ENCODE measurements at regions of chr22 and their contacts with region 1.

Region 1: DNA sequence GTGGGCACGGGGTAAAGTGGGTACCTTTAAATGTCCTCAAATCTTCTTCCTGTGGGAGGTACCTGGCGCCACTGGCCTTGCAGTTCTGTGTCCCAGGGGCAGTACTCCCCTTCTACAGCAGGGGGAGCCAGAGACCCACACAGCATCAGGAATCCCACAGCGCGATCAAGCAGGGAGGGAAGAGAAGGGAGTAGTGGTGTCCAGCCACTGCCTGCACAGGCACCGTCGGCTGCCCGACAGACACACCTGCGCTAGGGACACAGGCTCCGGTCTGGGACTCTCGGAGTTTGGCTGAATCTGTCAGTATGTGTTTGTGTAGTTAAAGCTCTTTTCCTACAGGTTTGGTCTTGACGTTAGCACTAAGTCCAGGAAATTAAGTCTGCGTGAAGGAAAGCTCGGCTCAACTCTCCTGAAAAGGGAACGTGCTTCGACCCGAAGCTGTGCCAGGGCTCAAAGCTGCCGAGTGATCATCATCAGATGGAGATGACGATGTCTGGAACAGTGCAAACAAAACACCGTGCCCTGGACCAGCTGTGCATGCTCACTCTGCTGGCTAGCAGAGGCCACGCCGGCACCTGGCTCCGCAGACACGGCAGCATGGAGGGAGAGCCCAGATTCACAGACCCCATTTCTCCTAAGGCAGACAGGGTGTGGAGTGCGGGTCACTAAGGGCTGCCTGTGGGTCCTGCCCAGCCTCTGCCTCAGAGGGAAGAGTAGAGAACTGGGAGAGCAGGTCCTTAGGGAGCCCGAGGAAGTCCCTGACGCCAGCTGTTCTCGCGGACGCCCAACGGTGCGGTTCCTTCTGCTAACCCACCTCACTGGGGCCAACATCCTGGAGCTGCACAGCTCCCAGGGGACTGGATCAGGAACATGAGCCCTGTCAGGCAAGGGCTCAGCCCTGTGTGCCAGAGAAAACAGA is 56.0 kb upstream of the BID start:
- DNase-seq: peak; percentile 92
- H3K4me3 ChIP-seq: peak overlapping the region in 1 of 2 experiments; percentile 17; a peak in 1 of 4 replicates
- H3K27ac ChIP-seq: no peak overlapping the region; a peak in 1 of 4 replicates
- H3K4me1 ChIP-seq: peaks cover 0 to 9% of the 10 kb centered on the region in 2 experiments; a peak in 1 of 4 replicates
- H3K27me3 ChIP-seq: no peaks in the 10 kb centered on the region
- CTCF ChIP-seq: peak; percentile 97
- EP300 ChIP-seq: no peak
- RAD21 ChIP-seq: peak; percentile 98

Region 2: GRCh38 chr22:17706018-17706900 is 124.0 kb before region 1 on chr22:
- CTCF ChIA-PET with region 1: no interaction called
- POLR2A ChIA-PET with region 1: no interaction called
- DNase-seq: peak; percentile 33
- H3K4me3 ChIP-seq: peak overlapping the region; percentile 33 to 63; a peak in 3 of 4 replicates
- H3K27ac ChIP-seq: peak overlapping the region; percentile 64 to 95
- H3K4me1 ChIP-seq: peaks cover 3 to 7% of the 10 kb centered on the region in 2 experiments; a peak in 3 of 4 replicates
- H3K27me3 ChIP-seq: no peaks in the 10 kb centered on the region
- CTCF ChIP-seq: no peak
- EP300 ChIP-seq: 0 out of 4 replicates have a peak, but pooled peaks of 1 of the 2 experiments have one; percentile 20
- RAD21 ChIP-seq: no peak

Region 3: GRCh38 chr22:17818180-17818579 is 12.1 kb before region 1 on chr22:
- CTCF ChIA-PET with region 1: interaction called, 19 read pairs
- POLR2A ChIA-PET with region 1: no interaction called
- DNase-seq: no peak
- H3K4me3 ChIP-seq: no peak overlapping the region
- H3K27ac ChIP-seq: no peak overlapping the region
- H3K4me1 ChIP-seq: no peaks in the 10 kb centered on the region
- H3K27me3 ChIP-seq: no peaks in the 10 kb centered on the region
- CTCF ChIP-seq: no peak
- EP300 ChIP-seq: no peak
- RAD21 ChIP-seq: no peak

Region 4: DNA sequence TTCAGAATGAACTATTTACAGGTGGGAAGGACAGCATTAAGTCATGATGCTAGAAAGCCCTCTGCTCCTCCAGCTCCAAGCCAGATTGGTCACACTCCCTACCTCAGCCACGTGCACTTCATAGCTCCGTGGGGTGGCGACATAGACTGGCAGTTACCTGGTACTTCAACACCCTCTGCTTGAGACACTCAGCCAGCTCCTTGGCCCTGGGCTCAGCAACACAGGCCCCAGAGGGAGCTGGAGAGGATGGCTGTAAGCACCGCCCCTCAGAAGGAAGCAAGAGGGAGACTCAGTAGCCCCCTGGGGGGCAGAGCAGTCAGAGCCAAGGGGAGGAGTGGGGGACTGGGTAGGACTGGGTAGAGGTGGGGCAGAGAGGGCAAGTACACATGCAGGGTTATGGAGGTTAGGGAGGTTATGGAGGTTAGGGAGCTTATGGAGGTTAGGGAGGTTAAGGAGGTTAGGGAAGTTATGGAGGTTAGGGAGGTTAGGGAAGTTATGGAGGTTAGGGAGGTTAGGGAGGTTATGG is 46.1 kb after region 1 on chr22:
- CTCF ChIA-PET with region 1: interaction called, 13 read pairs
- POLR2A ChIA-PET with region 1: no interaction called
- DNase-seq: no peak
- H3K4me3 ChIP-seq: no peak overlapping the region
- H3K27ac ChIP-seq: no peak overlapping the region
- H3K4me1 ChIP-seq: peaks cover 0 to 36% of the 10 kb centered on the region in 2 experiments; a peak in 2 of 4 replicates
- H3K27me3 ChIP-seq: no peaks in the 10 kb centered on the region
- CTCF ChIP-seq: no peak
- EP300 ChIP-seq: no peak
- RAD21 ChIP-seq: no peak

Region 5: GRCh38 chr22:17891481-17892167 is 61.3 kb after region 1 on chr22:
- CTCF ChIA-PET with region 1: interaction called, 112 read pairs
- POLR2A ChIA-PET with region 1: no interaction called
- DNase-seq: peak; percentile 62
- H3K4me3 ChIP-seq: no peak overlapping the region
- H3K27ac ChIP-seq: no peak overlapping the region; a peak in 1 of 4 replicates
- H3K4me1 ChIP-seq: peaks cover 8 to 9% of the 10 kb centered on the region in 2 experiments; a peak in 3 of 4 replicates
- H3K27me3 ChIP-seq: no peaks in the 10 kb centered on the region
- CTCF ChIP-seq: peak; percentile 39
- EP300 ChIP-seq: no peak
- RAD21 ChIP-seq: peak; percentile 76

Region 6: DNA sequence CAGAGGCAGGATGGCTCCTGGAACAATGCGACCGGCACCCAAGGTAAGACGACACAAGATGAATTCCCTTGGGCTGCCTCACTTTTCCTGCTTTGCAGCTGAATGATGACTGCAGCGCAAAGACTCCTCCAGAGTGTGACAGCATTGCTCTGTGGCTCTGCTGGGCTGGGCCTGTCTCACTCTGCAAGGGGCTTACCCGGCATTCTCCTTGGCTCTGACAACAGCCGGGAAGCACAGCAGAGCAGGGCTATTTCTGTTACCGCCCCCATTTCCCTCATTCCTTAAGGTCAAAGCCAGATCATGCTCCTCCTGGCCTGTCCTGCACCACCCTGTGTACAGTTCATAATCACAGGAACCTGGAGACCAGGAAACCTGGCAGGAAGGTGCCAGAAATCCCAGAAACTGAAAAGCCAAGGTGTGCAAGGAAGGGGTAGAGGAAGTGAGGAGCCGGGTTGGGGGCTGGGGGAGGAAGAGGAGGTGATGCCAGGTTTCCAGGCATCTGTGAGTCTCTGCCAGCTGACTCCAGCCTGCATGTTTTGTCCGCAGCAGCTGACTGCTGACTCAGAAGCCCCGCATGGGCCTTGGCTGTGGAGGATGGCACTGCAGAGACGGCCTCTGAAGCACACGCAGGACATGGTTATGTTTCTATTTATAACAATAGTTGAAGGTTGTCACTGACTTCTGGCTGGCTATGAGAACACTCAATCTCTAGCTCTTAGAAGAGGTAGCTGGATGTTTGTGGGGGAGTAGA is 80.4 kb after region 1 on chr22:
- CTCF ChIA-PET with region 1: interaction called, 14 read pairs
- POLR2A ChIA-PET with region 1: no interaction called
- DNase-seq: peak; percentile 68
- H3K4me3 ChIP-seq: peak overlapping the region in 1 of 2 experiments; percentile 57; a peak in 2 of 4 replicates
- H3K27ac ChIP-seq: peak overlapping the region; percentile 60 to 94
- H3K4me1 ChIP-seq: peaks cover 20 to 33% of the 10 kb centered on the region in 2 experiments
- H3K27me3 ChIP-seq: no peaks in the 10 kb centered on the region
- CTCF ChIP-seq: peak; percentile 66
- EP300 ChIP-seq: peak in 1 of 2 experiments; percentile 55; a peak in 1 of 4 replicates
- RAD21 ChIP-seq: peak; percentile 88

Region 7: DNA sequence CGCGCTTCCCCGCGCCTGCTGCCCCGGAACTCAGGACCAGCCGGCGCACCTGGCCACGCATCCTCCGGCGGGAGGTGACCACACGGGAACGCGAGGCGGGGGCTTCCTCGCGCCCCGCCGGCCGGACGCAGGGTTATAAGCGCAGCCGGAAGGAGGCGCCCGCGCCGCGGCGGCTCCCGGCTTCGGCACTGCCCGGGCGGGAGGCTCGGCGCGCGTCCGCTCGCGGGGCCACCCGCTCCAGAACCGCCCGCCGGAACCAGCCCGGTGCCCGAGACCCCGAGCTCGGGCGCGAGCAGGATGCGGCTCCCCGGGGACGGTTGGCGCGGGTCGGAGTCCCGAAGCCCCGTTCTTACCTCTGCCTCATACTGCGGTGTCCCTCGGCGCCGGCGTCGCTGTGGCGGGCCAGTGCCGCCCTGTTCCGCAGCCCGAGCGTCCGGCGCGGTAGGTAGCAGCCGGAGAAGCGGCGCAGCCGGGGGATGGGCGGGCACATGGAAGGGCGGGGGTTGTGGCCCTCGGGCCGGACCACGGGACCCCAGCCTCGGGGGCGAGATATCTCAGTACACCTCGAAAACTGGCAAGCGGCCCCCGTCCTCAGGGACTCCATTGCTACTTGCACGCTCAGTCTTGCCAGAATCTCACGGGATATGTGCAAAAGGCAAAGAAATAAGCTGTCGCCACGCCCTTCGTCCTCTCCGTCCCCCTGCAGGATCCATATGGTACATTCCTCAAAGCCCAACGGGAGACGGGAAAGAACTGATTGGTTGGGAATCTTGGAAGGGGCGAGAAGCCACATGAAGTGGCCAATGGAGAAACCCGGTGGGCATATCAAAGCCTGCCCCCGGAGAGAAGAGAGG is 171.0 kb after region 1 on chr22:
- CTCF ChIA-PET with region 1: interaction called, 15 read pairs
- POLR2A ChIA-PET with region 1: no interaction called
- DNase-seq: peak; percentile 95
- H3K4me3 ChIP-seq: peak overlapping the region; percentile 69 to 92
- H3K27ac ChIP-seq: peak overlapping the region; percentile 84 to 97
- H3K4me1 ChIP-seq: peaks cover 4 to 6% of the 10 kb centered on the region in 2 experiments; a peak in 2 of 4 replicates
- H3K27me3 ChIP-seq: no peaks in the 10 kb centered on the region
- CTCF ChIP-seq: peak; percentile 54
- EP300 ChIP-seq: no peak
- RAD21 ChIP-seq: peak; percentile 52

Region 8: DNA sequence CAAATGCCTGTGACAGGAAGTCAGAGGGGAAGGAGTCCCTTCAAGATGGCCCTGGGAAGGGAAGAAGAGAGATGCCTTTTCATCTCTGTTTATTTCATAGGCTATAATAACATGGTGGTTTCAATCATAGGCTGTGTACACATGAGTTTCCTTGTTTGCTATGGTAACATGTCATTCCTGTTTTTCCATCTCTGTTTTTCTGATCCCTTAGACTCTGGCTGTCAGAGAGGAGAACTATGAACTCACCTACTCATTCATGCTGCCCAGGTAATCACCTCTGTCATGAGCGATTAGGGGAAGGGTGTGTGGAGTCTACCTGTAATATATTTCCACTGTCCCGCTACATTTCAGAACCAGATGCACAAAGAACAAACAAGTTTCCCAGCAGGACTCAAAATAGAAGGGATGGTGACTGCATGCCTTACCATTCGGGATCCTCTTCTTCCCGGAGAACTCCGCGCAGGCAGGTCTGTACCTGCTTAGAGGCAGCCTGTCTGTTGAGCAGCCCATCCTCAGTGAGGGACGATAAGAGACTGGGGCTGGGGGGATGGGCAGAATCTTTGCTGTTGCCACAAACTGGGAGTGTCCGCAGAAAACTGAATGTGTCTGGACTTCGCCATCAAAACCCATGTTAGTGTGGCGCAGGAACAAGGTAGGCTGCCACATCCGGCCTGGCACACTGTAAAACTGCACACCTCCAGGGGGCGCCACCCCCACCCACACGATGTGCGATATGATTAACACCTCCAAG is 240.4 kb after region 1 on chr22:
- CTCF ChIA-PET with region 1: interaction called, 186 read pairs
- POLR2A ChIA-PET with region 1: no interaction called
- DNase-seq: no peak
- H3K4me3 ChIP-seq: no peak overlapping the region
- H3K27ac ChIP-seq: no peak overlapping the region
- H3K4me1 ChIP-seq: no peaks in the 10 kb centered on the region; a peak in 1 of 4 replicates
- H3K27me3 ChIP-seq: no peaks in the 10 kb centered on the region
- CTCF ChIP-seq: peak; percentile 54
- EP300 ChIP-seq: no peak
- RAD21 ChIP-seq: no peak